Right ventricle myocardium inferior (tissue), 1 donor: ENCODE measurements at regions of chr5 and their contacts with region 1.

Region 1: GRCh38 chr5:1883120-1883924 is 597 bp upstream of the IRX4 start:
- DNase-seq: peak; percentile 55
- ATAC-seq: peak; percentile 52

Region 2: GRCh38 chr5:1751016-1751878 is 132.1 kb before region 1 on chr5:
- intact Hi-C with region 1: no loop called
- DNase-seq: no peak
- ATAC-seq: no peak

Region 3: DNA sequence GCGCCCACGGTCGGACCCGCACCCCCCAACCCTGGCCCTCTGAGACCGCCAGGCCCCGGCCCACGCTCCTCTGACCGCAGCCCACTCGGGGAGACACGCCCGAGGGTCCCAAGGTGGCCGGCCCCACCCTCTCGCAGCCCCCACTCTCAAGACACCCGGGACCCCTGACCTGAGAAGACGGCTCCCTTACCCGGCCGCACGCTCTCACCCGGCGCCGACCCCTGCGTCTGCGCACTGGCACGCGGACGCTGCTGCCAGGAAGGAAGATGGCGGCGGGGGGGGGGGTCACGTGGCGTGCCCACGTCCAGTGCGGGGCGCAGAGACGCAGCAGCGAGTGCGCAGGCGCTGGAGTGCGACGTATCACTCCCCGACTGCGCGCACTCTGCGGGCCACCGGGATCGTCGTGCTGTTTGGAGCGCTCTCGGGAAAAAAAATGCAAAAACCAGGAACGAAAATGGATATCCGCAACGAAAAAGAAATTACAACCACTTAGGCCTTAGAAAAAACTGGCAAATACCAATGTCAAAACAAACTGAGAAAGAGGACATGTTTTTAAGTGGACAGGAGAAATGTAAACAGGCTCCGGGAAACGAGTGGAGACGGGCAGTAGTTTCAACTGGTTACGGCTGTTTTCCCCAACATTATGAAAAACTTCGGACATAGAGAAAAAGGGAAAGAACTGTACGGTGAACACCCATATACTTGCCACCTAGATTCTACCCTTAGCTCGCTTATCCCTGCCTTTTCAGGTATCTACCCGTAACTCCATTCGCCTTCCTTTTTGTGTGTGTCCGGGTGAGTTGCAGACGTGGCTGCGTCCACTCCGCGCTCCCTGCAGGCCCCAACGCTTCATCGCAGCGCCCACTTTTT is 83.5 kb before region 1 on chr5 and contains the start of gene MRPL36:
- intact Hi-C with region 1: loop called (anchors 2 kb)
- DNase-seq: peak; percentile 98
- ATAC-seq: peak; percentile 93
- total RNA-seq, gene MRPL36: 62.3 TPM

Region 4: DNA sequence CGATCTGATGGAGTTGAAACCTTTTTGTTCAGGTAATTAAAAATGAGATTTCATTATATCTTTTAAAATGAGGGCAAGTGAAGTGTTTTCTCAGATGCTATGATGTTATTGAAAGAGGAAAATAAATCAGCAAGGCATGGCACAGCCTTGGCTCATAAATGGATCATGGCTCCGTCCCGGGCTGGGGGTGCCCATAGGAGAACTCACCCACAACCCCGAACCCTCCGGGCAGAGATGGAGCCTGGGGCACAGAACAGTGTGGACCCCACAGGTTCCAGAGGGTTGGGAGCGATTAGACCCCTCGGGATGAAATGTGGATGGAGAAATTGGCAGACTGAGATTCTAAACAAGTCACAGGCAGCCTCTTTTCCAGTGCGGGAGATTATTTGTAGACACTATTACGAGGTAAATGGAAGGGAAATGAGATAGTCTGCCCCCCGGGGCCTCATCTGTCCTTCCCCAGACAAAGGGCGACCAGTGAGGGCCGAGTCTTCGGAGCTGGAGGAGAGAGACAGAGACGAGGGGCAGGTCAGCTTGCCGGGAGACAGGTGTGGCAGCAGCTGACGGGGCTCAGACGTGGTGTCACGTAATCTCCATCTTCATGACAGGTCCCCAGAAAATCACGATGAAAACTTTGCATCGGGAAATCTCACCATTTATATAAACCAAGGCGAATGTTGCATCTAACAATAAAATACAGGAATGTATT is 48.4 kb before region 1 on chr5:
- intact Hi-C with region 1: loop called (anchors 5 kb)
- DNase-seq: no peak
- ATAC-seq: no peak

Region 5: DNA sequence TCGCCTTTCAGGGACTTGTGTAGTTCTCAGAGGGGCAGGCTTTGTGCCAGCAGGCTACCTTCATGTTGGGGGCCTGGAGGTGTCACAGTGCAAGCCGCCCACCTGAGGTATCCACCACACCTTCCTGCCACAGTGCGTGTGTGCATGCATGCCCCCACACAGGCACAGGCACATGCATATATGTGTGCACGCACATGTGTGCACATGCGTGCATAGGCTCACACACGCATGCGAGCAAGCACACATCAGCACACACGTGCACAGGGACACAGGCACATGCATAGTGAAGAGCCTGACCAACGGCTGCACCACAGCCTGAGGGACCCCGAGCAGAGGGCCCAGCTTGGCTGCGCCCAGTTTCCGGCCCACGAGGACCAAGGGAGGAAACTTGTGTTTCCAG is 36.7 kb before region 1 on chr5:
- intact Hi-C with region 1: no loop called
- DNase-seq: peak; percentile 28
- ATAC-seq: no peak

Region 6: DNA sequence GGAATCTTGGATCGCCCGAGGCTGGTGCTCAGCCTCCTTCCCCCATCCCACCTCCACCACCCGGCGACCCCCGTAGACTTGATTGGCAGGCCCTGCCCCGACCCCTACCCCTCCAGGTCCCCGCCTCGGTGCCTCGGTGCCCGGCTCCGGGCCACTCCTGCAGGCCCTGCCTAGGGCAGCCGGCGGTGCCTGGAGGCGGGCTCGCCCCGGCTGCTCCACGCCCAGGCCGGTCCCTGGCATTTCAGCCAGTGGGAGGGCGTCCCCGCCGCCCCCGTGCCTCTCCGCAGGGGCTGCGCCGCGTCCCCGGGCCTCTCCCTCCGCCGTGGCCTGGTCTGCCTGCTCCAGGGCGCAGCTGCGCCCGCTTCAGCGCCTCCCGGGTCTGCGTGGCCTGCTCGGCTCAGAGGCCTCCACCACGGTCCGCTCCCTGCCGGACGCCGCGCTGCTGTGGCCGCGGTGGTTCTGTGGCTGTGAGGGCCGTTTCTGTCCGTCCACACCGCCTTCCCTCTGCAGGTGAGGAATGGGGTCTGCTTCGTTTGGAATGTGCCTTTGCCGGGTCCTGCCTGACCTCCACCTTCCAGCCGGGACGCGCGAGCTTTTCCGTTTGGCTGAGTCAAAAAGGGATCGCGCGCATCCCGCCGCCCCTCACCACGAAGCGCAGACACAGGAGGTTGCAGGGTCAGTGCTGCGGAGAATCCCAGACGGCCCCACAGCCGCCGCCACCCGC is 47.7 kb after region 1 on chr5:
- intact Hi-C with region 1: loop called (anchors 5 kb)
- DNase-seq: no peak
- ATAC-seq: peak; percentile 85

Region 7: GRCh38 chr5:1948663-1949652 is 65.6 kb after region 1 on chr5:
- intact Hi-C with region 1: loop called (anchors 5 kb)
- DNase-seq: peak; percentile 79
- ATAC-seq: peak; percentile 91

Region 8: GRCh38 chr5:2013301-2014057 is 130.2 kb after region 1 on chr5:
- intact Hi-C with region 1: loop called (anchors 5 kb)
- DNase-seq: no peak
- ATAC-seq: peak; percentile 24